Activated CD4-positive, alpha-beta T cell treated with anti-CD3 and anti-CD28 coated beads, Interleukin-2, amount 10 ng/mL, durations not matched to agents 24 days and 14 days (primary cell): ENCODE measurements at regions of chr10 and their contacts with region 1.

Region 1: GRCh38 chr10:8053446-8054290 is 820 bp upstream of the GATA3 start:
- DNase-seq: peak; percentile 98
- H3K4me3 Mint-ChIP-seq: peak overlapping the region; percentile 90
- H3K27ac Mint-ChIP-seq: peak overlapping the region; percentile 98
- H3K4me1 Mint-ChIP-seq: peaks cover 32% of the 10 kb centered on the region
- H3K27me3 Mint-ChIP-seq: peaks cover 23% of the 10 kb centered on the region

Region 2: GRCh38 chr10:7525314-7526016 is 528.2 kb before region 1 on chr10:
- intact Hi-C with region 1: loop called (anchors 10 kb)
- DNase-seq: peak; percentile 91
- H3K4me3 Mint-ChIP-seq: no peak overlapping the region
- H3K27ac Mint-ChIP-seq: no peak overlapping the region
- H3K4me1 Mint-ChIP-seq: peaks cover 20% of the 10 kb centered on the region
- H3K27me3 Mint-ChIP-seq: peaks cover 18% of the 10 kb centered on the region

Region 3: DNA sequence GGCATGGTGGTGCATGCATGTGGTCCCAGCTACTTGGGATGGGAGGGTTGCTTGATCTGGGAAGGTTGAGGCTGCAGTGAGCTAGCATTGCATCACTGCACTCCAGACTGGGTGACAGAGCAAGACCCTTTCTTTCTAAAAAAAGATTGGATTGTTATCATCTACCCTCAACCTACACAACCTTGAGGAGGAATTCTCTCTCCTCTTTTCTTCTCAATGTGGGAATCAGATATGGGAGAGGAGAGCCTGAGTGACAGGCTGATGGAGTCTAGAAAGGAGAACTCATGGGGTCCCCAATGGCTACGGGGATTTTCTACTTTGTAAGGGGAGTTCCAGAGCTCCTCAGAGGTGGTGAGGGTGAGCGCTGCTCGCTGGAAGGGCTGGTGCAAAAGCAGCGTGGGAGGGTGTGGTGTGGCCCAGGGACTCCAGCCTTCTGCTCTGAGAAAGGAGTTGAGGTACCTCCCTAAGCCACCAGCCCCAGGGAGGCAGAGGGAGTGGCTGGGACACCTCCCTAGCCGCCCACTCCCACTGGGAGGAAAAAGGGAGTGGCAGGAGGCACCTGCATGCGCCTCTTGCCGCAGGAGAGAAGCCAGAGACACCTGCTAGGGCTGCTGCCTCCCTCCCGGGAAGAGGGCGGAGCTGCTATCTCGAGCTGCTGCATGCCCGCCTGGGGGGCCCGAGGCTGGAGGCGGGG is 49.2 kb after region 1 on chr10:
- intact Hi-C with region 1: no loop called
- DNase-seq: no peak
- H3K4me3 Mint-ChIP-seq: no peak overlapping the region
- H3K27ac Mint-ChIP-seq: no peak overlapping the region
- H3K4me1 Mint-ChIP-seq: peaks cover 7% of the 10 kb centered on the region
- H3K27me3 Mint-ChIP-seq: peaks cover 6% of the 10 kb centered on the region

Region 4: GRCh38 chr10:8130973-8131911 is 77.6 kb after region 1 on chr10:
- intact Hi-C with region 1: loop called (anchors 1 kb)
- DNase-seq: peak; percentile 84
- H3K4me3 Mint-ChIP-seq: peak overlapping the region; percentile 22
- H3K27ac Mint-ChIP-seq: peak overlapping the region; percentile 75
- H3K4me1 Mint-ChIP-seq: peaks cover 46% of the 10 kb centered on the region
- H3K27me3 Mint-ChIP-seq: peaks cover 4% of the 10 kb centered on the region

Region 5: GRCh38 chr10:8312781-8313180 is 259.1 kb after region 1 on chr10:
- intact Hi-C with region 1: loop called (anchors 1 kb)
- DNase-seq: no peak
- H3K4me3 Mint-ChIP-seq: no peak overlapping the region
- H3K27ac Mint-ChIP-seq: peak overlapping the region; percentile 64
- H3K4me1 Mint-ChIP-seq: peaks cover 34% of the 10 kb centered on the region
- H3K27me3 Mint-ChIP-seq: no peaks in the 10 kb centered on the region

Region 6: GRCh38 chr10:8404391-8405120 is 350.9 kb after region 1 on chr10:
- intact Hi-C with region 1: loop called (anchors 1 kb)
- DNase-seq: peak; percentile 92
- H3K4me3 Mint-ChIP-seq: peak overlapping the region; percentile 82
- H3K27ac Mint-ChIP-seq: peak overlapping the region; percentile 87
- H3K4me1 Mint-ChIP-seq: peaks cover 71% of the 10 kb centered on the region
- H3K27me3 Mint-ChIP-seq: no peaks in the 10 kb centered on the region

Region 7: DNA sequence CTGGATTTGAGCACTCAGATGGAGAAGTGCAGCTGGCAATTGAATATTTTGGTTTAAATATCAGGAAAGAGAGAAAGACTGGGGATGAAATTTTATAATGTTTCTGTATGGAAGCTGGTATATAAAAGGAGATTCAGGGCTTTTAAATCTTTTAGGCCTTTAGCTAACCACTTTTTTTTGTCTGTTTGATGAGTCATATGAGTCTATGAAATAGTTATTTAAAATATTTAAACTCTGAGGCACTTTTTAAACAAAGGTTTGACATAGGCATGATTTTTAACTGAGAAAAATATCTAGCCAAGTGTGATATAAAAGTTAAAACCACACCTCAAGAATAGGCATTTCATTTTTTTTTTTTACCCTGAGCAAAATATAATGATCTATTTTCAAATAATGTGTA is 945.1 kb after region 1 on chr10:
- intact Hi-C with region 1: loop called (anchors 10 kb)
- DNase-seq: no peak
- H3K4me3 Mint-ChIP-seq: no peak overlapping the region
- H3K27ac Mint-ChIP-seq: no peak overlapping the region
- H3K4me1 Mint-ChIP-seq: peaks cover 3% of the 10 kb centered on the region
- H3K27me3 Mint-ChIP-seq: no peaks in the 10 kb centered on the region

Region 8: GRCh38 chr10:9091530-9092093 is 1037.9 kb after region 1 on chr10:
- intact Hi-C with region 1: loop called (anchors 5 kb)
- DNase-seq: no peak
- H3K4me3 Mint-ChIP-seq: no peak overlapping the region
- H3K27ac Mint-ChIP-seq: no peak overlapping the region
- H3K4me1 Mint-ChIP-seq: peaks cover 12% of the 10 kb centered on the region
- H3K27me3 Mint-ChIP-seq: no peaks in the 10 kb centered on the region